ENCODE measurements at regions of chr22 and their contacts with region 1.

Region 1: GRCh38 chr22:35350539-35351503 is 30.1 kb upstream of the HMOX1 start:
- DNase-seq: peak; percentile 76
- ATAC-seq: peak; percentile 93
- H3K4me3 ChIP-seq: peak overlapping the region; percentile 48 to 77
- H3K27ac ChIP-seq: peak overlapping the region; percentile 94
- H3K4me1 ChIP-seq: peaks cover 24% of the 10 kb centered on the region
- H3K27me3 ChIP-seq: no peaks in the 10 kb centered on the region
- CTCF ChIP-seq: peak; percentile 85

Region 2: GRCh38 chr22:35301370-35301874 is 49.4 kb before region 1 on chr22:
- CTCF ChIA-PET with region 1: no interaction called
- POLR2A ChIA-PET with region 1: no interaction called
- in situ Hi-C with region 1: no loop called
- intact Hi-C with region 1: no loop called
- DNase-seq: peak; percentile 30
- ATAC-seq: no peak
- H3K4me3 ChIP-seq: peak overlapping the region; percentile 79 to 84
- H3K27ac ChIP-seq: peak overlapping the region; percentile 83
- H3K4me1 ChIP-seq: peaks cover 9% of the 10 kb centered on the region
- H3K27me3 ChIP-seq: no peaks in the 10 kb centered on the region
- CTCF ChIP-seq: no peak

Region 3: DNA sequence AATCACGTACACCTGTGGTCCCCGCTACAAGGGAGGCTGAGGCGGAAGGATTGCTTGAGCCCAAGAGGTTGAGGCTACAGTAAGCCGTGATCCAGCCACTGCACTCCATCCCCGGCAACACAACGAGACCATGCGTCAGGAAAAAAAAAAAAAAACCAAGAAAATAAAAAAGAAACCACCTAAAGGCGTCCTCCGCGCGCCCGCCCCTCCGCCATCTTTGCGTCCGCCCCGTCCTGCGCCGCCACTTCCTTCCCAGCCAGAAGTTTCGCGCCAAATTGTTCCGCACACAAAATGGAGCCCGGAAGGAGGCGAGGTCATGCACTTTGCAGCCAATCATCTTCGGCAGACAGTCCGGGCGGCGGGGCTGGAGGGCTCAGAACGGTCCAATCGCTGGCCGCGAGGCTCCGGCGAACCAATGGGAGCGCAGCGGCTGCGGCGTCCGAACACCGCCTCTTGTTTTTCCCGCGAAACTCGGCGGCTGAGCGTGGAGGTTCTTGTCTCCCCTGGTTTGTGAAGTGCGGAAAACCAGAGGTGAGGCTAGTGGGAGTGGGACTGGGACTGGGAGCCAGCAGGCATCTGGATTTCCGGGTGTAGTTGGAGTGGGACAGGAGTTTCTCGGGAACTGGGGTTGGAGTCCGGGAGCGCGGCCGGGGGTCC is 49.0 kb after region 1 on chr22 and contains the start of gene MCM5:
- CTCF ChIA-PET with region 1: interaction called, 3 read pairs
- POLR2A ChIA-PET with region 1: no interaction called
- in situ Hi-C with region 1: no loop called
- intact Hi-C with region 1: loop called (anchors 5 kb)
- DNase-seq: peak; percentile 84
- ATAC-seq: peak; percentile 93
- H3K4me3 ChIP-seq: peak within 1 kb of the TSS; percentile 81 to 83
- H3K27ac ChIP-seq: peak within 1 kb of the TSS; percentile 80
- H3K4me1 ChIP-seq: peaks cover 35% of the 10 kb centered on the region
- H3K27me3 ChIP-seq: no peaks in the 10 kb centered on the region
- CTCF ChIP-seq: no peak
- total RNA-seq, gene MCM5: 122 TPM

Region 4: GRCh38 chr22:35582861-35583670 is 232.2 kb after region 1 on chr22:
- CTCF ChIA-PET with region 1: interaction called, 3 read pairs
- POLR2A ChIA-PET with region 1: no interaction called
- in situ Hi-C with region 1: no loop called
- intact Hi-C with region 1: loop called (anchors 10 kb)
- DNase-seq: peak; percentile 48
- ATAC-seq: peak; percentile 85
- H3K4me3 ChIP-seq: no peak overlapping the region
- H3K27ac ChIP-seq: peak overlapping the region; percentile 99
- H3K4me1 ChIP-seq: peaks cover 38% of the 10 kb centered on the region
- H3K27me3 ChIP-seq: no peaks in the 10 kb centered on the region
- CTCF ChIP-seq: peak; percentile 91

Region 5: DNA sequence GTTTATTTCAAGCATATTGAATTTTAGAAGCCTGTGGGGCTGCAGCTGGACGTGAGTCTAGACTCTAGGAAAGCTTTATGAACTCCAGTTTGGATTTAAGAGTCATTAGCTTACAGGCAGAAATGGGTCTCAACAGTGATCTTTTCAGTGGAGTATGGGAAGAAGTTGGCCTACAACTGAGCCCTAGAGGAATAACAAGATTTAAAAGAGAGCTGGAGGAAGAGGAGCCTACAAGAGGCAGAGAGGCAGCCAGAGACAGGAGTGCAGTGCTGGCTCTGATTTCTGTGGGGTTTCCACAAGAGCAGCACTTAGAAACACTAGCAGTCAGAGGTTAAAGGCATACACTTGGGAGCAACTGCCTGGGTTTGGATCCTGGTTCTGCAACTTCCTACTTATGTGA is 384.7 kb after region 1 on chr22:
- CTCF ChIA-PET with region 1: no interaction called
- POLR2A ChIA-PET with region 1: interaction called, 16 read pairs
- in situ Hi-C with region 1: no loop called
- intact Hi-C with region 1: no loop called
- DNase-seq: no peak
- ATAC-seq: no peak
- H3K4me3 ChIP-seq: no peak overlapping the region
- H3K27ac ChIP-seq: peak overlapping the region; percentile 21; the same call in 1 of the 2 replicates
- H3K4me1 ChIP-seq: no peaks in the 10 kb centered on the region
- H3K27me3 ChIP-seq: no peaks in the 10 kb centered on the region
- CTCF ChIP-seq: no peak